ENCODE measurements at regions of chr21 and their contacts with region 1.

Region 1: GRCh38 chr21:29024474-29025327 is at the start of gene USP16:
- DNase-seq: peak; percentile 99
- ATAC-seq: peak; percentile 93
- H3K4me3 ChIP-seq: peak within 1 kb of the TSS; percentile 58 to 90 (median 74)
- H3K4me3 Mint-ChIP-seq: peak within 1 kb of the TSS; percentile 95
- H3K27ac ChIP-seq: peak within 1 kb of the TSS; percentile 97 to 98
- H3K27ac Mint-ChIP-seq: peak within 1 kb of the TSS; percentile 99
- H3K4me1 ChIP-seq: peaks cover 16 to 17% of the 10 kb centered on the region in 2 donors
- H3K4me1 Mint-ChIP-seq: peaks cover 40% of the 10 kb centered on the region
- H3K27me3 ChIP-seq: no peaks in the 10 kb centered on the region
- H3K27me3 Mint-ChIP-seq: no peaks in the 10 kb centered on the region
- CTCF ChIP-seq: no peak
- total RNA-seq, gene USP16: 54.7 and 55.7 TPM in 2 replicates

Region 2: GRCh38 chr21:29073222-29074006 is 48.7 kb after region 1 on chr21 and contains the start of gene CCT8:
- CTCF ChIA-PET with region 1: interaction called, 5 read pairs
- POLR2A ChIA-PET with region 1: interaction called, 9 read pairs
- intact Hi-C with region 1: loop called (anchors 1 kb)
- DNase-seq: peak; percentile 99
- ATAC-seq: peak; percentile 91
- H3K4me3 ChIP-seq: peak within 1 kb of the TSS; percentile 72 to 99 (median 98)
- H3K4me3 Mint-ChIP-seq: peak within 1 kb of the TSS; percentile 99
- H3K27ac ChIP-seq: peak within 1 kb of the TSS; percentile 80 to 86
- H3K27ac Mint-ChIP-seq: peak within 1 kb of the TSS; percentile 96
- H3K4me1 ChIP-seq: peaks cover 27 to 33% of the 10 kb centered on the region in 2 donors
- H3K4me1 Mint-ChIP-seq: peaks cover 57% of the 10 kb centered on the region
- H3K27me3 ChIP-seq: no peaks in the 10 kb centered on the region
- H3K27me3 Mint-ChIP-seq: no peaks in the 10 kb centered on the region
- CTCF ChIP-seq: no peak
- total RNA-seq, gene CCT8: 92.8 and 100 TPM in 2 replicates

Measured in B cell (primary cell).